ENCODE measurements at regions of chr1 and their contacts with region 1.

Region 1: DNA sequence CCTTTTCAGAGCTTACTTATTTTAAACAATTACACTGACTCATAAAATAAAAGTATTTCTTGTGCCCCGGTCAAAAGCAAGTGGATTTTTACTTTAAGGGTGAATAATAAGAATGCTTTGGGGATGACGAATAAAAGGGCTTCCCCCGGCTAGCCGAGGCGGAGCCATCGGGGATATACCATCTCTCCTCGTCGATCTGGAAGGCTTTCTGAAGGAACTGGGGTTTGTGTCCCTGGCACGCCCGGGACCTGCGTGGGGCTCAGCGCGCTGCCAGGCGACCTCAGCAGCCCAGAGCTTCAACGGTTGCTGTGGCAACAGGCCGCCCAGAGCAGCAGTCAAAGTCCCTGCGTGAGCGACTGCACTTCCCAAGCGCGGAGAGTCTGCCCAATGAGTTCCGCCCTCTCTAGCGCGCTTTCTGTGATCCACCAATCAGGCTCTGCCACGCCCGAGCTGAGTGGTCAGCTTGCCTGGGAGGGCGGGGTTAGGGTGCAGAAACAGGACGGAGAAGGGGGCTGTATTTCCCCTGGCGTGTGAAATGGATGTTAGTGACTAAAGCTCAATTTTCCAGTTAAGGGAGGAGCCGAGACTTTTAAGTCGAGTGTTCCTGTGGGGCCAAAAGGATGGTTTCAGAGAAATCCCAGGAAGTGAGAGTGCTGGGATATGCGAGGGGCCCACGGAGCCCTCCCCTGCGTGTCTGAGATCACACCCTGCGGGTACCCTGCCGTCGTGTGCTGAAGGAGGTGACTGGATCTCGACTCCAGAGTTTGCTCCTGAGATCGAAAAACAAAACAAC is 33.0 kb upstream of the MGST3 start:
- DNase-seq: peak; percentile 97
- H3K4me3 ChIP-seq: peak overlapping the region; percentile 46 to 76 (median 62)
- H3K27ac ChIP-seq: peak overlapping the region; percentile 72
- H3K4me1 ChIP-seq: peaks cover 13% of the 10 kb centered on the region
- H3K27me3 ChIP-seq: no peaks in the 10 kb centered on the region
- CTCF ChIP-seq: no peak

Region 2: DNA sequence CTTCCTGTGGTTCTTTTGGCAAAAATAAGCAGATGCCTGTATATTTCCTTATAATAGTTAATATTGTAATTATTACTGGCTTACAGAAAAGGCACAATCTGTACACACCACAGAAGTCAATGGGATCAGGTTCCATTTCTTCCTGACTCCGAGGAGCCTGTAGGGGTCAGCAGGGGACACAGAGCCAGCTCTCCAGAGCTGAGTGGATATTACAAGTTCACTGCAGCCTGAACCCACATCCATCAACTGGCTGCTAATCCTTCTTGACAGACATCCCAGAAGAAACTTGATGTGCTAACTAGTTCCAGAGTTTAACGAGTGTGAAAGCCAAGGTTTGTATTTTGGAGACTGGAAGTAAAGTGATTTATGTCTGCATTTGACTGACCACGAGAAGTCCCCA is 445.4 kb before region 1 on chr1:
- CTCF ChIA-PET with region 1: no interaction called
- dilution Hi-C with region 1: no loop called
- in situ Hi-C with region 1: loop called in 1 of 2 experiments (anchors 25 kb)
- intact Hi-C with region 1: no loop called
- DNase-seq: no peak
- H3K4me3 ChIP-seq: no peak overlapping the region
- H3K27ac ChIP-seq: no peak overlapping the region
- H3K4me1 ChIP-seq: no peaks in the 10 kb centered on the region
- H3K27me3 ChIP-seq: no peaks in the 10 kb centered on the region
- CTCF ChIP-seq: peak; percentile 37 to 61

Region 3: GRCh38 chr1:165403835-165404482 is 194.1 kb before region 1 on chr1:
- CTCF ChIA-PET with region 1: interaction called, 5 read pairs
- dilution Hi-C with region 1: loop called (anchors 10 kb)
- in situ Hi-C with region 1: loop called (anchors 5 kb)
- intact Hi-C with region 1: loop called (anchors 1 kb)
- DNase-seq: peak; percentile 25
- H3K4me3 ChIP-seq: no peak overlapping the region
- H3K27ac ChIP-seq: no peak overlapping the region
- H3K4me1 ChIP-seq: no peaks in the 10 kb centered on the region
- H3K27me3 ChIP-seq: peaks cover 2% of the 10 kb centered on the region
- CTCF ChIP-seq: peak; percentile 60 to 79

Region 4: GRCh38 chr1:165531021-165531420 is 67.1 kb before region 1 on chr1:
- CTCF ChIA-PET with region 1: no interaction called
- dilution Hi-C with region 1: no loop called
- in situ Hi-C with region 1: no loop called
- intact Hi-C with region 1: no loop called
- DNase-seq: no peak
- H3K4me3 ChIP-seq: no peak overlapping the region
- H3K27ac ChIP-seq: no peak overlapping the region
- H3K4me1 ChIP-seq: no peaks in the 10 kb centered on the region
- H3K27me3 ChIP-seq: no peaks in the 10 kb centered on the region
- CTCF ChIP-seq: no peak

Region 5: DNA sequence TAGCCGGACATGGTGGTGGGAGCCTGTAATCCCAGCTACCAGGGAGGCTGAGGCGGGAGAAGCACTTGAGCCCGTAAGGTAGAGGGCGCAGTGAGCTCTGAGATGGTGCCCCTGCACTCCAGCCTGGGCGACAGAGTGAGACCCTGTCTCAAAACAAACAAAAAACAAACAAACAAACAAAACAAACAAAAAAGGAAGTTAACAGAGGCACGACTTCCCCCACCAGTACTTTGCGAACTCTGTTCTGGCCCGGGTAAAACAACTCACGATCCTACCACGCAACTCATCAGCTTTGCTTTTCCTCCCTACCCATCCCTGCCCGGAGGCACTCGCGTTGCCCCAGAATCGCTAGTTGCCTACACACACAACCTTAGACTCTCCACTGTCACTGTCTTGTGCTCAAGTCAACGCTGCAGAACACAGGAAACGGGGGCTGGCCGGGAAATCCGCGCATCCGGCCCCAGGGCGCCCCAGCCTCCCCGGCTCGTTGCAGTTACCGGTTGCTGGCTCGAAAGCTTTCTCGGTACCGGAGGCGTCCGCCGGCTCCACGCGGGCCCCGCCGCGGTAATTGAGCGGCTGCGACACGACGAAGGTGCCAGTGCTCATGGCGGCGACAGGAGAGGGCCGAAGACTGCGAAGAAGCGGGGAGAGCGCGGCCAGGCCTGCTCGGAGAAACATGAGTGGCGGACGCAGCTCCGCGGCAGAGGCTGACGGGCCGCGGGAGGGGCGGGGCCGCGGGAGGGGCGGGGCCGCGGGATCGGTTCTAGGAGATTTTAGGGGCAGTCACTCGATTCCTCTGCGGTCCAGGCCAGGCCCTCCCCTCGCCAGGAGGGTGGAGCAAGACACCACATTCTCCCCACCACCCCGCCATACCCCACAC is 100.0 kb after region 1 on chr1 and contains the start of gene ALDH9A1:
- CTCF ChIA-PET with region 1: no interaction called
- dilution Hi-C with region 1: no loop called
- in situ Hi-C with region 1: no loop called
- intact Hi-C with region 1: loop called (anchors 1 kb)
- DNase-seq: peak; percentile 80
- H3K4me3 ChIP-seq: peak within 1 kb of the TSS; percentile 57 to 87 (median 79)
- H3K27ac ChIP-seq: peak within 1 kb of the TSS; percentile 79
- H3K4me1 ChIP-seq: peaks cover 13% of the 10 kb centered on the region
- H3K27me3 ChIP-seq: no peaks in the 10 kb centered on the region
- CTCF ChIP-seq: peak; percentile 1 to 34
- total RNA-seq, gene ALDH9A1: 51.2 to 55.2 TPM

Region 6: DNA sequence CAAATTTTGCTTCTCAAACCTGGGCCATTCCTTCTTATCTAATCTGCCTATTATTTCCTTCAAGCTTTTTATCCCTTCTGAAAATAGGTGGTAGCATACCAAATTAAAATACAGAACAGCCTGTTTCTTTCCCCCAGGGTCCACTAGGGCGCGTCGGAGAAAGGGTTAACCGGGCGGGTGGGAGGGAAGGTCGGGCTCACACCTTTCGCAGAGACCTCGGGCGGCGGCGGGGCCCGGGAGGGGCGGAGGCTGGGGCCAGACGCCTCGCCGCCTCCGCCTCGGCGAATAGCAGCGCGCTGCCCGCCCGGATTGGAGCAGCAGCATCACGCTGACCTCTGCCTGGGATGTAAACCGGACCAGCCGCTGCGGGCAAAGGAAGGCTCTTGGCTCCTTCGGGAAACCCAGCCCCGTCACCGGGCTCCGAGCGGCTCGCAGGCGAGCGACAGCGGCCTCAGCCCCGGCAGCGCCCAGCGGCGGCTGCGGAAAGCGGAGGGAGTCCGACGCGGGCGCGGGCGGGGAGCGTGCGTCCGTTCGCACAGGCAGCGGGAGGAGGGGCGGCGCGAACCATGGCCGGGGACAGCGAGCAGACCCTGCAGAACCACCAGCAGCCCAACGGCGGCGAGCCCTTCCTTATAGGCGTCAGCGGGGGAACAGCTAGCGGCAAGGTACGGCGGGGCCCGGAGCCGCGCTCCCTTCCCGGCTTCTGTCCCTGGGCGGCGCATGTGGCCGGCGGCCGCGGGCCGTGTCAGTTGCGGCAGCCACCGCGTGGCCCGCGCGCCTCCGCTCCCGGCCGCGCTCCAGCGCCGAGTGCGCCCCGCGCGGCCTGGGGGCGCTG is 229.4 kb after region 1 on chr1 and contains the start of gene UCK2:
- CTCF ChIA-PET with region 1: no interaction called
- dilution Hi-C with region 1: no loop called
- in situ Hi-C with region 1: no loop called
- intact Hi-C with region 1: loop called (anchors 1 kb)
- DNase-seq: peak; percentile 81
- H3K4me3 ChIP-seq: peak within 1 kb of the TSS; percentile 81 to 89 (median 85)
- H3K27ac ChIP-seq: peak within 1 kb of the TSS; percentile 85
- H3K4me1 ChIP-seq: peaks cover 13% of the 10 kb centered on the region
- H3K27me3 ChIP-seq: no peaks in the 10 kb centered on the region
- CTCF ChIP-seq: peak in 1 of 2 donors; percentile 0
- total RNA-seq, gene UCK2: 85.2 to 111 TPM